Caco-2 (cell line): ENCODE measurements at regions of chr2 and their contacts with region 1.

Region 1: GRCh38 chr2:169275696-169276444 is 86.5 kb downstream of the LRP2 start:
- DNase-seq: no peak
- H3K4me3 ChIP-seq: no peak overlapping the region
- H3K4me3 Mint-ChIP-seq: no peak overlapping the region
- H3K27ac Mint-ChIP-seq: no peak overlapping the region
- H3K4me1 ChIP-seq: no peaks in the 10 kb centered on the region
- H3K4me1 Mint-ChIP-seq: peaks cover 9% of the 10 kb centered on the region
- H3K27me3 ChIP-seq: no peaks in the 10 kb centered on the region
- H3K27me3 Mint-ChIP-seq: no peaks in the 10 kb centered on the region
- CTCF ChIP-seq: peak; percentile 21 to 52

Region 2: DNA sequence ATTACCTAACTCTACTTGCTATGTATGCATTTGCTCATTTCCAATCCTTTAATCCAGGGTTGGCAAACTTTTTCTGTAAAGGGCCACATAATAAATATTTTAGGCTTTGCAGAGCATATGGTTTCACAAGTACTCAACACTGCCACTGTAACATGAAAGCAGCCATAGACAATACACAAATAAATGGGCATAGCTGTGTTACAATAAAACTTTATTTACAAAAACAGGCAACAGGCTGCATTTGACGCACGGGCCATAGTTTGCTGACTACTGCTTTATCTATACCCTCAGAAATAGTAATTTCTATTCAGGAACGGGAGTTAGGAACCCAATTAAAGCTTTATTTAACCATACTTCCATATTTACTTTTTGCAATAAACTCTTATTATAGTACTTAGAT is 67.8 kb before region 1 on chr2:
- CTCF ChIA-PET with region 1: no interaction called
- POLR2A ChIA-PET with region 1: no interaction called
- intact Hi-C with region 1: no loop called
- DNase-seq: no peak
- H3K4me3 ChIP-seq: no peak overlapping the region
- H3K4me3 Mint-ChIP-seq: no peak overlapping the region
- H3K27ac Mint-ChIP-seq: no peak overlapping the region
- H3K4me1 ChIP-seq: no peaks in the 10 kb centered on the region
- H3K4me1 Mint-ChIP-seq: no peaks in the 10 kb centered on the region
- H3K27me3 ChIP-seq: no peaks in the 10 kb centered on the region
- H3K27me3 Mint-ChIP-seq: no peaks in the 10 kb centered on the region
- CTCF ChIP-seq: no peak

Region 3: GRCh38 chr2:169221745-169222369 is 54.0 kb before region 1 on chr2:
- CTCF ChIA-PET with region 1: interaction called, 5 read pairs
- POLR2A ChIA-PET with region 1: no interaction called
- intact Hi-C with region 1: loop called (anchors 5 kb)
- DNase-seq: no peak
- H3K4me3 ChIP-seq: no peak overlapping the region
- H3K4me3 Mint-ChIP-seq: no peak overlapping the region
- H3K27ac Mint-ChIP-seq: no peak overlapping the region
- H3K4me1 ChIP-seq: no peaks in the 10 kb centered on the region
- H3K4me1 Mint-ChIP-seq: no peaks in the 10 kb centered on the region
- H3K27me3 ChIP-seq: no peaks in the 10 kb centered on the region
- H3K27me3 Mint-ChIP-seq: no peaks in the 10 kb centered on the region
- CTCF ChIP-seq: peak; percentile 37 to 44